Pancreas (tissue), 10 donors: ENCODE measurements at regions of chr7 and their contacts with region 1.

Region 1: DNA sequence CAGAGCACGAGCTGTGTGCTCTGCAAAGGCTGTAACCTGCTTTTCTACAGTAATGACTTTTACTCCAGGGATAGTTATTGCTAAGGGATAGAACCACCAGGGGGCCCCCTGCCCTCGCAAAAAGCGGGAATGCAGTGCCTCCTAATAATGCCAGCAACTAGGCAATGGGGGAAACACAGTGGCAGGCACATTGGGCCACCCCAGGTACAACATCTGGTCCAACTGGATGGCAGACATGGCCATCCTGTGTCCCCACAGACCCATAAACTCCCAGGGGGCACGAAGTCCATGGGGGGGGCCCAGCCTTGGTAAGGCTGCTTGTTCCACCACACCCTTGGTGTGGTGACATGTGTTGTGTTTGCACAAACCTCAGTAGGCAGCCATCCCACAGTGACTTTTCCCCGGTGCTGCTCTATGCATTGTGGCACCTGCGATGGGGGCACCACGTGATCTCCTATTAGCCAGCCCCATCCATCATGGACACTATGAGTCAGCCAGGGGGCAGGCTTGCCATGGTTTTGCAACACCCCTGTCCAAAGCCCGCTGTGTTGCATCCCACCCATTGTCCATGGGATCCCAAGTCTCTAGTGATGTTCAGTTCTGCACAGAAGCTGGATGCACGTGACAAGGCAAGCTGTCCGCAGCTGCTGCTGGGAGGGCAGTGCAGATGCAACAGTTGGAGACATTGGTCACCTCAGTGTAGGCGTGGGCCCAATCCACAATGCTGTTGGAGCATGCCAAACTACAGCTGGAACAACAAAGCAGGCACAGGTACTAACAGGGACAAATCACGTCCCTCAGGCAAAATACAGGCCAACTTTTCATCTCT is 84.0 kb downstream of the ANLN start:
- DNase-seq: peak in 5 of 6 donors; percentile 30 to 70 (median 47)
- ATAC-seq: peak; percentile 62 to 74 (median 72)
- H3K4me3 ChIP-seq: no peak overlapping the region
- H3K27ac ChIP-seq: no peak overlapping the region
- H3K4me1 ChIP-seq: no peaks in the 10 kb centered on the region
- H3K27me3 ChIP-seq: no peaks in the 10 kb centered on the region
- CTCF ChIP-seq: peak in 3 of 4 donors; percentile 27 to 41 (median 28)

Region 2: GRCh38 chr7:36615852-36616540 is 142.3 kb after region 1 on chr7:
- intact Hi-C with region 1: no loop called
- DNase-seq: no peak
- ATAC-seq: no peak
- H3K4me3 ChIP-seq: no peak overlapping the region
- H3K27ac ChIP-seq: no peak overlapping the region
- H3K4me1 ChIP-seq: peaks cover 0 to 4% (median 0%) of the 10 kb centered on the region in 3 donors
- H3K27me3 ChIP-seq: no peaks in the 10 kb centered on the region
- CTCF ChIP-seq: no peak

Region 3: GRCh38 chr7:37198906-37199485 is 725.3 kb after region 1 on chr7:
- intact Hi-C with region 1: loop called in 1 of 3 experiments (anchors 10 kb)
- DNase-seq: peak; percentile 72 to 90 (median 82)
- ATAC-seq: peak; percentile 85 to 92 (median 90)
- H3K4me3 ChIP-seq: no peak overlapping the region
- H3K27ac ChIP-seq: no peak overlapping the region
- H3K4me1 ChIP-seq: peaks cover 0 to 7% (median 5%) of the 10 kb centered on the region in 3 donors
- H3K27me3 ChIP-seq: no peaks in the 10 kb centered on the region
- CTCF ChIP-seq: peak; percentile 65 to 90 (median 84)